ENCODE measurements at regions of chr12 and their contacts with region 1.

Region 1: DNA sequence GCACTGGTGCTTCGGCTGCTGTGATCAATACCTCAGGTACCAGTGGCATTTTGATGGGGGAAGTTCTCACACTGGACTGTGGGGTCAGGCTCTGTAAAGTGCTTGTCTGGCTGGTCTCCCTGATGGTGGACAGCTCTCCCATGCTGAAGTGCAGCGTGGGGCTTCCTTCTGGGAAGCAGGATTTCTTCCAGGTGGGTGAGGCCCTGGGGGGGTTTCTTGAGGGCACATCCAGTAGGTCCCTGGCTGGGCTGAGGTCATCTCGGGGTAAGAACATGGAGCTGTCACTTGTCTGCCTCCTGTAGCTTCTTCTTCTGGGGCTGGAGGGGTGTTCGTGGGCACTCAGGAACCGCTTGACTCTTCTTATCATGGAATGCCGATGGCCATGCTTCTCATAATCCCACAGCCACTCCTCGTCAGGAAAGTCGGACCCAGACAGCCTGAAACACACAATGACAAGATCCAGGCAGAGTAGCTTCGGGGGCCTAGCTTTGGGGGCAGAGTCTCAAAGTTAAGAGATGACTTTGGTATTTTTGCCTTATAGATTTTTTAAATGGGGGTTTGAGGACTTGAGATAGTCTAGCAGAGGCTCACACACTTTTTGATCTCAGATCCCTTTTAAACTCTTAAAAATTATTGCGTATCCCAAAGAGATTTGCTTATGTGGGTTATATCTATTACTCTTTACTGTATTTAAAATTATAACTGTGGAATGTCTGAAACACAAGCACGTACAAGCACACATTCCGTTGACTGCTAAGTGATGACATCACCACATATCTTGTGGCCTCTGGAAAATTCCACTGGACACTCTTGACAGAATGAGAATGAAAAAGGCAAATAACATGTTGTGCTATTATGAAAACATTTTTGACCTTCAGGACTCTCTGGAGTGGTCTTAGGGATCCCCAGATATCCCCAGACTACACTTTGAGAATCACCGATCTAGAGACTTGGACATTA is 43.4 kb downstream of the BEST3 start:
- DNase-seq: no peak
- ATAC-seq: no peak
- H3K4me3 ChIP-seq: no peak overlapping the region
- H3K27ac ChIP-seq: peak overlapping the region; percentile 80 to 91 (median 86)
- H3K4me1 ChIP-seq: peaks cover 21 to 32% of the 10 kb centered on the region in 2 donors
- H3K27me3 ChIP-seq: no peaks in the 10 kb centered on the region
- CTCF ChIP-seq: no peak
- POLR2A ChIP-seq: no peak

Region 2: GRCh38 chr12:69442894-69443293 is 212.8 kb before region 1 on chr12:
- in situ Hi-C with region 1: no loop called
- intact Hi-C with region 1: no loop called
- DNase-seq: no peak
- ATAC-seq: no peak
- H3K4me3 ChIP-seq: no peak overlapping the region
- H3K27ac ChIP-seq: no peak overlapping the region
- H3K4me1 ChIP-seq: no peaks in the 10 kb centered on the region
- H3K27me3 ChIP-seq: no peaks in the 10 kb centered on the region
- CTCF ChIP-seq: no peak
- POLR2A ChIP-seq: no peak

Region 3: GRCh38 chr12:69688496-69689427 is 33.1 kb after region 1 on chr12:
- in situ Hi-C with region 1: no loop called
- intact Hi-C with region 1: loop called (anchors 1 kb)
- DNase-seq: peak; percentile 94 to 98
- ATAC-seq: peak; percentile 80 to 82
- H3K4me3 ChIP-seq: peak overlapping the region in 1 of 4 donors; percentile 5
- H3K27ac ChIP-seq: peak overlapping the region; percentile 77 to 93 (median 90)
- H3K4me1 ChIP-seq: peaks cover 78 to 87% of the 10 kb centered on the region in 2 donors
- H3K27me3 ChIP-seq: no peaks in the 10 kb centered on the region
- CTCF ChIP-seq: no peak
- POLR2A ChIP-seq: peak; percentile 78 to 89

Region 4: DNA sequence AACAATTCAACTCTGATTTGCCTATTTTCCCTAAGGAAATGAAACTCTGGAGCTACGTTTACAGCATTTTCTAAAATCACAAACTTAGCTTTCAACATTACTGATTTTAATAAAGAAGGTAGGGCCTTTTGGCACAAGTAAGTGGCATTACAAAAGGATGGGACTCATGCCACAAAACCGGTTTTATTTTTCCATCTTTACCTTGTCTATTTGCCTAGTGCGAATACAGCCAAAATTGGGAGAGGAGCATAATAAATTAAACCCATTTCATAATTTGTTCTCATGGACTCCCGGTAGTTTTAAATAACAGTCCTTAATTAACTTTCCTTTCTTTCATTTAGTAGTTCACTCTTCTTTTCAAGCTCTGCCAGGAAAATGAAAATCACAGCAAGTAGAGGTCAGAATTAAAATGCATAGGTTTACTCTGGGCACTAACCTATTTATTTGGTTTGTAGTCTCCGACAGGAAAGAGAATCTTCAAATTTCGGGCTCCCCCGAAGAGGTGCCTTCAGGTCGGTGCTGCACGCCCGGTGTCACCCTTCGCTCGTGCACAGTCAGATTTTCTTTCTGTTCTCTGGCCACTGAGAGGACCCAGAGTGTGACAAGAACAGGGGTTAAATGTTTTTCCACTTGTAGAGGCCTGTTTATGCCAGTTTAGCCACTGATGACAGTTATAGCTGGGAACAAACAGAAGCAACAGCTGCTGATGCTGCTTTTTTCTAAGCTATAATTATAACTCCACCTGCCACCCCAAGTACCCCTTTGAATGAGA is 43.3 kb after region 1 on chr12 and contains the start of gene BEST3:
- in situ Hi-C with region 1: no loop called
- intact Hi-C with region 1: loop called (anchors 2 kb)
- DNase-seq: peak; percentile 80 to 82
- ATAC-seq: peak; percentile 95 to 98
- H3K4me3 ChIP-seq: peak within 1 kb of the TSS; percentile 50 to 62 (median 56)
- H3K27ac ChIP-seq: peak within 1 kb of the TSS; percentile 77 to 93 (median 90)
- H3K4me1 ChIP-seq: peaks cover 24 to 42% of the 10 kb centered on the region in 2 donors
- H3K27me3 ChIP-seq: no peaks in the 10 kb centered on the region
- CTCF ChIP-seq: no peak
- POLR2A ChIP-seq: peak; percentile 59 to 91
- total RNA-seq, gene BEST3: 61.8 to 163 (median 119) TPM